ENCODE measurements at regions of chr1 and their contacts with region 1.

Region 1: DNA sequence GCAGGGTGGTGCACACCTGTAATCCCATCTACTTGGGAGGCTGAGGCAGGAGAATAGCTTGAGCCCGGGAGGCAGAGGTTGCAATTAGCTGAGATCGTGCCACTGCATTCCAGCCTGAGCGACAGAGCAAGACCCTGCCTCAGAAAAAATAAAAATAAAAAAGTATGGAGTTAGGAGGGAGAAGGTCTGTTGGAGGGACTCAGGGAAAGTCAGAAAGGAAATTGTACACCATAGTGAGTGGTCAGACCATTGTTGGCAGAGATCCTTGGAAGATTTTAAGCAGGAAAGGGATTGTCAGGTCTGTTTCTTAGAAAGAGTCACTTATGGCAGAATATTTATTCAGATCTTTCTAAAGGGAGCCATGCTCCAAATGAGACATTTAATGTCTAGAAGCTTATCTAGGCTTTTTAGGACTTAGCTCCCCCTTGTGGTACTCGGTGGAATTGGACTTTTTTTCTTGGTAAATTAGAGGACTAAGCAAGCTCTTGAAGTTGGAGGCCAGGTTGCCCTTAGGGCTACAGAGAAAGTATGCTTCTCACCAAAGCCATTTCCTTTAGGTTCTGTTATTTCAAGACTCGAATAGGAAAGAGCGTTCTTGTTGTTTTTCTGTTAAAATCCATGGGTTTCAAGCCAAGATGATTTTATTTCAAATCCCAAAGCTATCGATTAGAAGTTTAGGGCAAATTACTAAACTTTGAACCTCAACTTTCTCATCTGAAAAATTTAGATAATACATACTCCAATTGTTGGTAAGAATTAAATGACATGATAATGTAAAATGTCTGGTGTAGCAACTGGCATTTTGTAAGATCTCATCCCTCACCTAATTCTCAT is 16.5 kb downstream of the MIA3 start:
- DNase-seq: no peak
- ATAC-seq: peak; percentile 95
- H3K4me3 ChIP-seq: no peak overlapping the region
- H3K27ac ChIP-seq: no peak overlapping the region
- H3K4me1 ChIP-seq: no peaks in the 10 kb centered on the region
- H3K27me3 ChIP-seq: no peaks in the 10 kb centered on the region
- CTCF ChIP-seq: peak; percentile 77 to 90 (median 85)
- EP300 ChIP-seq: no peak
- POLR2A ChIP-seq: no peak
- RAD21 ChIP-seq: peak; percentile 90

Region 2: DNA sequence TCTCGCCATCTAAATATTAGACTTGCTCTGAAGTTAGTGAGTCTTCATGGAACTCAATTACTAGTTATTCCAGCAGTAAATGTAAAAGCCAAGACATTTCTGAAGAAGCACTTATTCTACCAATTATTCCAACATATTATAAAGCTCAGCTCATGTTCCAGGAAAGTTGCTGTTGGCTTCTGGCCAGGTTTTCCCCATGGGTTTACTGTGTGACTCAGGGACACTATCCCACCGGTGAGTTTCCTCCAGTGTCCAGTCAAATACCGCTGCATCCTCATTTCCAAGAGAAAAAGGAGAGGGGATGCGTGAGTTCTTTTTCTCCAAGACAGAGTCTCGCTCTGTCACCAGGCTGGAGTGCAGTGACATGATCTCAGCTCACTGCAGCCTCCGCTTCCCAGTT is 77.2 kb before region 1 on chr1:
- CTCF ChIA-PET with region 1: interaction called, 10 read pairs
- POLR2A ChIA-PET with region 1: no interaction called
- RAD21 ChIA-PET with region 1: interaction called, 3 read pairs
- SMC1A ChIA-PET with region 1: interaction called, 8 read pairs
- in situ Hi-C with region 1: no loop called
- intact Hi-C with region 1: no loop called
- DNase-seq: no peak
- ATAC-seq: no peak
- H3K4me3 ChIP-seq: no peak overlapping the region
- H3K27ac ChIP-seq: no peak overlapping the region
- H3K4me1 ChIP-seq: no peaks in the 10 kb centered on the region
- H3K27me3 ChIP-seq: no peaks in the 10 kb centered on the region
- CTCF ChIP-seq: no peak
- EP300 ChIP-seq: no peak
- POLR2A ChIP-seq: no peak
- RAD21 ChIP-seq: no peak

Region 3: DNA sequence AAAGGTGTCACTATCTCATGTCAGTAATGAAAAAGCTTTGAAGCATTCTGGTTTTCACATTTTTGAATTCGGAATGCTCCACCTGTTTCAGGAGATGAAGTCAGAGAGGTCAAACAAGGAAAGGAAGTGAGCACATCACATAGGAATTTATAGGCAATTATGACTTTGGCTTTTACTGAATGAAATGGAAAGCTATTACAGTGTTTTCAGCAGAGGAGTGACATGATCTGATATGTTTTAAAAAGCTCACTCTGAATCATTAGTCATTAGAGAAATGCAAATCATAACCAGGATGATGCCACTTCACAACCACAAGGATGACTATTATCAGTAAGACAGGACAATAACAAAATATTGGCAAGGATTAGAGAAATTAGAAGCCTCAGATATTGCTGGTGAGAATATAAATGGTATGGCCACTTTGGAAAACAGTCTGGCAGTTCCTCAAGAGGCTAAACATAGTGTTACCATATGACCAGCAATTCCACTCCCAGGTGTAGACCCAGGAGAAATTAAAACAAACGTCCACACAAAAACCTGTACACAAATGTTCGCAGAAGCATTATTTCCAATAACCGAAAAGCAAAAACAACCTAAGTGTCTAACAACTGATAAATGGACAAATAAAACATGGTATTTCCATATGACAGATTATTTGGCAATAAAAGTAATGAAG is 52.2 kb before region 1 on chr1:
- CTCF ChIA-PET with region 1: interaction called, 16 read pairs
- POLR2A ChIA-PET with region 1: no interaction called
- RAD21 ChIA-PET with region 1: interaction called, 6 read pairs
- SMC1A ChIA-PET with region 1: interaction called, 5 read pairs
- in situ Hi-C with region 1: no loop called
- intact Hi-C with region 1: no loop called
- DNase-seq: peak; percentile 45
- ATAC-seq: peak; percentile 90
- H3K4me3 ChIP-seq: no peak overlapping the region
- H3K27ac ChIP-seq: peak overlapping the region; percentile 17
- H3K4me1 ChIP-seq: peaks cover 25% of the 10 kb centered on the region
- H3K27me3 ChIP-seq: no peaks in the 10 kb centered on the region
- CTCF ChIP-seq: no peak
- EP300 ChIP-seq: no peak
- POLR2A ChIP-seq: no peak
- RAD21 ChIP-seq: no peak

Region 4: GRCh38 chr1:222589462-222590302 is 44.7 kb before region 1 on chr1 and contains the start of gene TAF1A:
- CTCF ChIA-PET with region 1: interaction called, 16 read pairs
- POLR2A ChIA-PET with region 1: interaction called, 3 read pairs
- RAD21 ChIA-PET with region 1: interaction called, 6 read pairs
- SMC1A ChIA-PET with region 1: interaction called, 6 read pairs
- in situ Hi-C with region 1: no loop called
- intact Hi-C with region 1: no loop called
- DNase-seq: peak; percentile 43
- ATAC-seq: peak; percentile 98
- H3K4me3 ChIP-seq: peak within 1 kb of the TSS; percentile 78
- H3K27ac ChIP-seq: peak within 1 kb of the TSS; percentile 90
- H3K4me1 ChIP-seq: no peaks in the 10 kb centered on the region; the same call in 1 of the 2 replicates
- H3K27me3 ChIP-seq: no peaks in the 10 kb centered on the region
- CTCF ChIP-seq: no peak
- EP300 ChIP-seq: no peak
- POLR2A ChIP-seq: peak; percentile 84
- RAD21 ChIP-seq: peak; percentile 2; the same call in 1 of the 2 replicates
- polyA plus RNA-seq, gene TAF1A: 12.2 to 17.9 TPM

Region 5: DNA sequence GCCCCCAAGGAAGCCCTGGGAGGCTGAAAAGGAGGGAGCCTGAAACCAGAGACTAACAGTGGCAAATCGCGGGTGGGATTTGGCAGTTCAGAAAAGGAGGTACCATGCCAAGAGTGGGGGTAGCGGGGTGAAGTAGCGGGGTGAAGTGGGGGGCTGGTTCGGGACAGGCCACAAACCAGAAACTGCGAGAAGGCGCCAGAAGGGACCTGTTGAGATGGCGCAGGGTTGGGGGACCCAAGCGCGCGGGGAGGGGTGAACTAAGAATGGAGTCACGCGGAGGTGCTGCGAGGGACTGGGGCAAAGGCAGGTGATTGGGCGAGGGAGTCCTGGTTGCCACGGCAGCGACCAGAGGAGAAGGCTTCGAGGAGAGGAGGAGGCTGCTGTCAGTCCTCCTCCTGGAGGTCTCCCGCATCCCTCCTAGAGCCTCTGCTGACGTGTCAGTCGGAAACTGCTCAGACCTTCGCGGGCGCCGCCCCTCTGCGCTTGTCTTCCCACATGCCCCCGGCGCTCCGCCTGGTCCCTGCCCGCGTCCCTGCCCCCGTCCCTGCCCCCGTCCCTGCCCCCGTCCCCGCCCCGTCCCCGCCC is 16.9 kb before region 1 on chr1:
- CTCF ChIA-PET with region 1: interaction called, 22 read pairs
- POLR2A ChIA-PET with region 1: interaction called, 3 read pairs
- RAD21 ChIA-PET with region 1: interaction called, 17 read pairs
- SMC1A ChIA-PET with region 1: interaction called, 13 read pairs
- in situ Hi-C with region 1: no loop called
- intact Hi-C with region 1: no loop called
- DNase-seq: peak; percentile 61
- ATAC-seq: peak; percentile 87
- H3K4me3 ChIP-seq: peak overlapping the region; percentile 67
- H3K27ac ChIP-seq: peak overlapping the region; percentile 23
- H3K4me1 ChIP-seq: peaks cover 7% of the 10 kb centered on the region; the same call in 1 of the 2 replicates
- H3K27me3 ChIP-seq: no peaks in the 10 kb centered on the region; a peak in 1 of 4 replicates
- CTCF ChIP-seq: no peak
- EP300 ChIP-seq: no peak
- POLR2A ChIP-seq: peak; percentile 76
- RAD21 ChIP-seq: no peak

Region 6: GRCh38 chr1:223081181-223081994 is 447.0 kb after region 1 on chr1:
- CTCF ChIA-PET with region 1: interaction called, 5 read pairs
- POLR2A ChIA-PET with region 1: no interaction called
- RAD21 ChIA-PET with region 1: interaction called, 4 read pairs
- SMC1A ChIA-PET with region 1: interaction called, 3 read pairs
- in situ Hi-C with region 1: no loop called
- intact Hi-C with region 1: loop called (anchors 5 kb)
- DNase-seq: peak; percentile 11
- ATAC-seq: peak; percentile 99
- H3K4me3 ChIP-seq: peak overlapping the region; percentile 16; the same call in 1 of the 2 replicates
- H3K27ac ChIP-seq: no peak overlapping the region
- H3K4me1 ChIP-seq: no peaks in the 10 kb centered on the region
- H3K27me3 ChIP-seq: no peaks in the 10 kb centered on the region; a peak in 1 of 4 replicates
- CTCF ChIP-seq: peak; percentile 76 to 94 (median 93); a peak in 5 of 6 replicates
- EP300 ChIP-seq: no peak
- POLR2A ChIP-seq: no peak
- RAD21 ChIP-seq: peak; percentile 85

Region 7: GRCh38 chr1:223087291-223088255 is 453.2 kb after region 1 on chr1:
- CTCF ChIA-PET with region 1: interaction called, 11 read pairs
- POLR2A ChIA-PET with region 1: no interaction called
- RAD21 ChIA-PET with region 1: no interaction called
- SMC1A ChIA-PET with region 1: no interaction called
- in situ Hi-C with region 1: no loop called
- intact Hi-C with region 1: loop called (anchors 5 kb)
- DNase-seq: no peak
- ATAC-seq: no peak
- H3K4me3 ChIP-seq: no peak overlapping the region
- H3K27ac ChIP-seq: no peak overlapping the region
- H3K4me1 ChIP-seq: no peaks in the 10 kb centered on the region
- H3K27me3 ChIP-seq: no peaks in the 10 kb centered on the region; a peak in 2 of 4 replicates
- CTCF ChIP-seq: no peak
- EP300 ChIP-seq: no peak
- POLR2A ChIP-seq: no peak
- RAD21 ChIP-seq: no peak

Measured in GM12878 (cell line).